ENCODE measurements at regions of chr1 and their contacts with region 1.

Region 1: DNA sequence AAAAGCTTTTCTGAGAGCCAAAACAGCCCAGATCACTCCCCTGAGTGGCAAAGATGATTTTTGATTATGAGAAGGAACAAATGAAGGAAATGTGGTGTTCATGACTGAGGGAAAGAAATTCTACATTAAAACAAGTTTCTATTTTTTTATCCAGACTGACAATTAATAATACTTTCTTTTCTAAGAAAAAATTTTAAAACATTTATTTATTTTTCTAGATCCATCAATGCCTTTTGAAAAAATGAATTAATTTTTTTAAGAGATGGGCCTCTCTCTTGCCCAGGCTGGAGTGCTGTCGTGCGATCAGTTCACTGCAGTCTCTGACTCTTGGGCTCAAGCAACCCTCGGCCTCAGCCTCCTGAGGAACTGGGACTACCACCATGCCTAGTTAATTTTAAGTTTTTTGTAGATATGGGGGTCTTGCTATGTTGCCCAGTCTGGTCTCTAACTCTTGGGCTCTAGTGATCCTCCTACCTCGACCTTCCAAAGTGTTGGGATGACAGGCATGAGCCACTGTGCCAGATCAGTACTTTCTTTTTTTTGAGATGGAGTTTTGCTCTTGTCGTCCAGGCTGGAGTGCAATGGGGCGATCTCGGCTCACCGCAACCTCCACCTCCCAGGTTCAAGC is 11.2 kb upstream of the TXNIP start:
- DNase-seq: no peak
- ATAC-seq: no peak
- H3K4me3 ChIP-seq: no peak overlapping the region
- H3K4me1 ChIP-seq: peaks cover 7% of the 10 kb centered on the region
- CTCF ChIP-seq: no peak

Region 2: GRCh38 chr1:145936247-145936646 is 71.4 kb before region 1 on chr1:
- intact Hi-C with region 1: no loop called
- DNase-seq: no peak
- ATAC-seq: no peak
- H3K4me3 ChIP-seq: no peak overlapping the region
- H3K4me1 ChIP-seq: no peaks in the 10 kb centered on the region
- CTCF ChIP-seq: no peak

Region 3: GRCh38 chr1:145972580-145972979 is 35.0 kb before region 1 on chr1:
- intact Hi-C with region 1: loop called (anchors 1 to 5 kb)
- DNase-seq: no peak
- ATAC-seq: no peak
- H3K4me3 ChIP-seq: no peak overlapping the region
- H3K4me1 ChIP-seq: peaks cover 5% of the 10 kb centered on the region
- CTCF ChIP-seq: no peak

Region 4: GRCh38 chr1:145977486-145978470 is 29.8 kb before region 1 on chr1:
- intact Hi-C with region 1: loop called (anchors 1 to 5 kb)
- DNase-seq: peak in 1 of 3 donors; percentile 86
- ATAC-seq: peak; percentile 60
- H3K4me3 ChIP-seq: no peak overlapping the region
- H3K4me1 ChIP-seq: peaks cover 43% of the 10 kb centered on the region
- CTCF ChIP-seq: peak; percentile 55

Measured in mucosa of descending colon (tissue), 3 donors.